Activated CD4-positive, alpha-beta memory T cell treated with anti-CD3 and anti-CD28 coated beads, Interleukin-2, amount 10 ng/mL, durations not matched to agents 7 days and 5 days (primary cell): ENCODE measurements at regions of chr6 and their contacts with region 1.

Region 1: GRCh38 chr6:32971581-32972352 is 3.4 kb downstream of the BRD2 start:
- DNase-seq: peak; percentile 100
- H3K4me3 Mint-ChIP-seq: peak overlapping the region; percentile 97
- H3K27ac Mint-ChIP-seq: peak overlapping the region; percentile 98
- H3K4me1 Mint-ChIP-seq: peaks cover 29% of the 10 kb centered on the region
- H3K27me3 Mint-ChIP-seq: no peaks in the 10 kb centered on the region

Region 2: GRCh38 chr6:32843979-32844838 is 127.6 kb before region 1 on chr6 and contains the start of gene PSMB8:
- CTCF ChIA-PET with region 1: interaction called, 44 read pairs
- POLR2A ChIA-PET with region 1: interaction called, 656 read pairs
- DNase-seq: peak; percentile 99
- H3K4me3 Mint-ChIP-seq: peak within 1 kb of the TSS; percentile 97
- H3K27ac Mint-ChIP-seq: peak within 1 kb of the TSS; percentile 99
- H3K4me1 Mint-ChIP-seq: peaks cover 69% of the 10 kb centered on the region
- H3K27me3 Mint-ChIP-seq: no peaks in the 10 kb centered on the region
- total RNA-seq, gene PSMB8: 389 to 401 TPM

Region 3: DNA sequence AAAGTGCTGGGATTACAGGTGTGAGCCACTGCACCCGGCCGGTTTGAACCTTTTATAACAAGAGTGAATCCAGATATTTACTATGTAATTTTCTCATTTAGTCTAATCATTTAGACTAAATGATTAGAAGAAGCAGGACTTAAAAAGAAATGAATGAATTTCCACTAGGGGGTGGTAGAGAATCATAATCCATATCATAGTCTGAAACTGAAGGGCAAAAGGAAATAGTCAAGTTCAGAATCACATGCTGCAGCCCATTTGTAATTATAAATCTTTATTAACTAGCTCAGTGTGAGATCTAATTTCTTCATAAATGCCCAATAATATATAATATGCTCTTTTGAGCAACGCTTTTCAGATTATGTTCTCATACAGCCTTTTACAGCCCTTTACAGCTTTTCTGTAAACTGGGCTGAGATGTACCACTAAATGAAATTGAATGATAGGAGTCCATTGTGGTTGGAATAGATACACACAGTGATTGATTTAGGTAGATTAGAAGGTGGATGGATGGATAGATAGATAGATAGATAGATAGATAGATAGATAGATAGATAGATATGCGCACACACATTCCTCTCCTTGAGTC is 86.0 kb before region 1 on chr6:
- CTCF ChIA-PET with region 1: interaction called, 10 read pairs
- POLR2A ChIA-PET with region 1: interaction called, 18 read pairs
- DNase-seq: no peak
- H3K4me3 Mint-ChIP-seq: no peak overlapping the region
- H3K27ac Mint-ChIP-seq: no peak overlapping the region
- H3K4me1 Mint-ChIP-seq: peaks cover 2% of the 10 kb centered on the region
- H3K27me3 Mint-ChIP-seq: peaks cover 4% of the 10 kb centered on the region

Region 4: GRCh38 chr6:32940656-32941213 is 31.0 kb before region 1 on chr6 and contains the start of gene HLA-DMB:
- CTCF ChIA-PET with region 1: interaction called, 62 read pairs
- POLR2A ChIA-PET with region 1: interaction called, 303 read pairs
- DNase-seq: peak; percentile 60
- H3K4me3 Mint-ChIP-seq: peak within 1 kb of the TSS; percentile 82
- H3K27ac Mint-ChIP-seq: peak within 1 kb of the TSS; percentile 94
- H3K4me1 Mint-ChIP-seq: peaks cover 59% of the 10 kb centered on the region
- H3K27me3 Mint-ChIP-seq: no peaks in the 10 kb centered on the region
- total RNA-seq, gene HLA-DMB: 19.1 to 20.0 TPM

Region 5: DNA sequence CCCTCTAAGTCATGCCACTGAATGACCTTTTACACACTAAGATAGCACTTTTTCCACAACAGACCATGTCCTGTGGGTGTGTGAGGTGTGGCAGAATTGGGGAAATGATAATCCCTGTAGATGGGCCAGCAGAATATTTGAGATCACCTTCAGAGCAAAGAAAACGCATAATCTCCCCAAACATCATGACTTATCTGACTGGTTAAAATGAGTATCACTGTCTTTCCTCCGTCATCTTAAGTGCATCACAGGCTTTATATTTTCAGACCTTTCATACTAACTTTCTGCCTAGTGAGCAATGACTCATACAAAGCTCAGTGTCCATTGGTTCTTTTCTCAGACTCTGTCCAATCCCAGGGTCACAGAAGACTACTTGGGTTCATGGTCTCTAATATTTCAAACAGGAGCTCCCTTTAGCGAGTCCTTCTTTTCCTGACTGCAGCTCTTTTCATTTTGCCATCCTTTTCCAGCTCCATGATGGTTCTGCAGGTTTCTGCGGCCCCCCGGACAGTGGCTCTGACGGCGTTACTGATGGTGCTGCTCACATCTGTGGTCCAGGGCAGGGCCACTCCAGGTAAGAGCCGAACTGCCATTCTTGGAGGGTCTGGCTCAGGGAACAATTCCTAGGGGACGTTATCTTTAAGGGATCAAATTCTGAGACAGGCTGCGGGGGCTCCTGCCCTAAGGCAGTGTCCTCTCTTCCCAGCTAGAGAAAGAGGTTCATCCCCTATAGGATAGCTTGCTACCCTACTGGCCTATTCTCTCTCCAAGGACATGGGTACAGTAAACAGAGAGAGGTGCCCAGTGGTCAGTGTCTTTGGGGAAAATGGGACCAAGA is 104.0 kb after region 1 on chr6 and contains the start of gene HLA-DPB1:
- CTCF ChIA-PET with region 1: interaction called, 4 read pairs
- POLR2A ChIA-PET with region 1: interaction called, 32 read pairs
- DNase-seq: peak; percentile 34
- H3K4me3 Mint-ChIP-seq: peak within 1 kb of the TSS; percentile 79
- H3K27ac Mint-ChIP-seq: peak within 1 kb of the TSS; percentile 78
- H3K4me1 Mint-ChIP-seq: peaks cover 69% of the 10 kb centered on the region
- H3K27me3 Mint-ChIP-seq: no peaks in the 10 kb centered on the region
- total RNA-seq, gene HLA-DPB1: 89.8 to 95.6 TPM

Region 6: DNA sequence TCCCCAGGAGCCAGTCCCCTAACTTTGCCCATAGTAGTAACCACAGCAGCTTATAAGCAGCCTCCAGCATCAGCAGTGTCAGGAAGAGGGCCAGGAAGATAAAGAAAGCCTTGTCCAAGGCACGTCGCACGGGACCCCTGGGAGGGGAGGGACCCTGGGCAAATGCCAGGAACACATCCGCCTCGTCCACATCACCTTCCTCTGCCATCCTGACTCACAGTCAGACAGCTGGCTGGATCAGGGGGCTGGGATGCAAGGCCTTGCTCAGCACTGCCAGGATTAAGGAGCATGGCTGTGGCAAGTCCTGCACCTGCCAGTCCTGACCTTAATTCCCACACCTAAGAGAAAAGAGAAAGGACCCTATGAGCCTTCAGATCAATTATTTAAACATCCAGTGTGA is 357.3 kb after region 1 on chr6:
- CTCF ChIA-PET with region 1: no interaction called
- POLR2A ChIA-PET with region 1: no interaction called
- DNase-seq: no peak
- H3K4me3 Mint-ChIP-seq: no peak overlapping the region
- H3K27ac Mint-ChIP-seq: no peak overlapping the region
- H3K4me1 Mint-ChIP-seq: peaks cover 4% of the 10 kb centered on the region
- H3K27me3 Mint-ChIP-seq: no peaks in the 10 kb centered on the region